ENCODE measurements at regions of chr22 and their contacts with region 1.

Region 1: GRCh38 chr22:36065775-36066559 is 37.3 kb upstream of the RBFOX2 start:
- DNase-seq: peak; percentile 88 to 93
- H3K4me3 ChIP-seq: peak overlapping the region; percentile 36 to 60 (median 40)
- H3K27ac ChIP-seq: peak overlapping the region; percentile 38; the same call in 1 of the 2 replicates
- H3K4me1 ChIP-seq: peaks cover 0 to 5% (median 3%) of the 10 kb centered on the region in 4 experiments; a peak in 4 of 7 replicates
- H3K27me3 ChIP-seq: peaks cover 0 to 4% (median 0%) of the 10 kb centered on the region in 4 experiments; a peak in 1 of 7 replicates
- CTCF ChIP-seq: peak; percentile 78 to 88 (median 85)
- EP300 ChIP-seq: no peak
- POLR2A ChIP-seq: peak in 1 of 2 experiments; percentile 86; a peak in 2 of 3 replicates
- RAD21 ChIP-seq: peak; percentile 50 to 67

Region 2: GRCh38 chr22:35631597-35631996 is 434.4 kb before region 1 on chr22:
- CTCF ChIA-PET with region 1: interaction called, 15 read pairs
- POLR2A ChIA-PET with region 1: interaction called, 3 read pairs
- DNase-seq: peak; percentile 47 to 85
- H3K4me3 ChIP-seq: no peak overlapping the region
- H3K27ac ChIP-seq: no peak overlapping the region
- H3K4me1 ChIP-seq: peaks cover 0 to 18% (median 7%) of the 10 kb centered on the region in 4 experiments; a peak in 6 of 7 replicates
- H3K27me3 ChIP-seq: peaks cover 0 to 2% (median 0%) of the 10 kb centered on the region in 4 experiments; a peak in 1 of 7 replicates
- CTCF ChIP-seq: peak; percentile 87 to 98 (median 98)
- EP300 ChIP-seq: no peak
- POLR2A ChIP-seq: no peak
- RAD21 ChIP-seq: peak; percentile 89 to 94

Region 3: DNA sequence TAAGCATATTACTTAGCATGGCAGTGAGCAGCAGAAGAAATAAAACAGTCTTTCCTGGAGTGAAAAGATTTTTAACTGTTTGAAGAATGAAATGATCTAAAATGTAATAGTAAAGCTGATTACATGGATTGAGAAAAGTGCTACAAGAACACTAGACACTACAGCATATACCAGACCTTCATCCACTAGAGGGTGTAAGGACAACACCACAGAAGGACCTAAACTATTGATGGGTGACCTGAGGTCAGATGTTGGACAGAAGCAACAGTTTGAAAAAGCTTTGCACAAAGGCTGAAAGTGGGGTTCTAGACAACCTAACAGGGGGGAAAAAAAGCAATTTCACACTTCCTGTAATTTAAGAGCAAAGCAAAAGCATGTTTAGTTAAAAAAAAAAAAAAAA is 135.0 kb before region 1 on chr22:
- CTCF ChIA-PET with region 1: interaction called, 16 read pairs
- POLR2A ChIA-PET with region 1: interaction called, 3 read pairs
- DNase-seq: no peak
- H3K4me3 ChIP-seq: no peak overlapping the region
- H3K27ac ChIP-seq: no peak overlapping the region
- H3K4me1 ChIP-seq: peaks cover 0 to 2% (median 0%) of the 10 kb centered on the region in 4 experiments; a peak in 1 of 7 replicates
- H3K27me3 ChIP-seq: no peaks in the 10 kb centered on the region
- CTCF ChIP-seq: peak in 2 of 3 experiments; percentile 54 to 62; a peak in 3 of 4 replicates
- EP300 ChIP-seq: no peak
- POLR2A ChIP-seq: no peak
- RAD21 ChIP-seq: peak; percentile 73 to 79

Region 4: GRCh38 chr22:36017651-36018091 is 48.3 kb before region 1 on chr22:
- CTCF ChIA-PET with region 1: interaction called, 19 read pairs
- POLR2A ChIA-PET with region 1: no interaction called
- DNase-seq: no peak
- H3K4me3 ChIP-seq: no peak overlapping the region
- H3K27ac ChIP-seq: no peak overlapping the region
- H3K4me1 ChIP-seq: no peaks in the 10 kb centered on the region
- H3K27me3 ChIP-seq: no peaks in the 10 kb centered on the region
- CTCF ChIP-seq: no peak
- EP300 ChIP-seq: no peak
- POLR2A ChIP-seq: no peak
- RAD21 ChIP-seq: no peak

Region 5: GRCh38 chr22:36081023-36081431 is 15.1 kb after region 1 on chr22:
- CTCF ChIA-PET with region 1: interaction called, 37 read pairs
- POLR2A ChIA-PET with region 1: interaction called, 4 read pairs
- DNase-seq: no peak
- H3K4me3 ChIP-seq: no peak overlapping the region
- H3K27ac ChIP-seq: no peak overlapping the region
- H3K4me1 ChIP-seq: peaks cover 0 to 4% (median 0%) of the 10 kb centered on the region in 4 experiments; a peak in 2 of 7 replicates
- H3K27me3 ChIP-seq: no peaks in the 10 kb centered on the region
- CTCF ChIP-seq: no peak
- EP300 ChIP-seq: no peak
- POLR2A ChIP-seq: no peak
- RAD21 ChIP-seq: no peak

Region 6: DNA sequence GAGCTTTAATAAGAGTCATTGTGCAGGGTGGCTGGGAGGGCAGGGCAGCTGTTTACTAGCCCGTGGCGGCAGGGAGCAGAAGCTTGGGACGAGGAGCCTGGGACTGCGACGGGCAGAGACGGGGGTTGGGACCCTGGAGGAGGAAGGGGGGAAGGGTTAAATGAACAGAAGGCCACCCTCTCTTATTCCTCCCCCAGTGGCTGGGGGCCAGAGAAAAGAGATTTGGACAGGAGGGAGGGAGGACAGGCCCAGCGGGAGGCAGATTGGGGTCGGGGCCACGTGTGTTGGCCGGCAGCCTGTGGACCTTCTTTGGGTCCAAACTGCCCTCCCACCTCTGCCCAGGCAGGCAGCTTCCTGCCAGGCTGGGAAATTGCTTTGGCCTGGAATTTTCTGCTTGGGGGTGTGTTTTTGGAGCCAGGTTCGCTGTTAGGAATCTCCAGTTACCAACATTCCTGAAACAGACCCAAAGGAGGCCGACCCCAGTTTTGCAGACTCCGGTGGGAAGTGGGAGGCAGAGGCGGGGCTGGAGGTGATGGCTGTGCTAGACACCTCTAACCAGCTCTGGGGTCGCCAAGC is 44.4 kb after region 1 on chr22:
- CTCF ChIA-PET with region 1: interaction called, 20 read pairs
- POLR2A ChIA-PET with region 1: no interaction called
- DNase-seq: no peak
- H3K4me3 ChIP-seq: no peak overlapping the region
- H3K27ac ChIP-seq: no peak overlapping the region
- H3K4me1 ChIP-seq: peaks cover 0 to 7% (median 4%) of the 10 kb centered on the region in 4 experiments; a peak in 5 of 7 replicates
- H3K27me3 ChIP-seq: no peaks in the 10 kb centered on the region
- CTCF ChIP-seq: no peak
- EP300 ChIP-seq: no peak
- POLR2A ChIP-seq: no peak
- RAD21 ChIP-seq: no peak

Measured in H1 (cell line).